ENCODE measurements at regions of chr10 and their contacts with region 1.

Region 1: GRCh38 chr10:19654576-19654975 is 161.7 kb upstream of the PLXDC2 start:
- DNase-seq: peak; percentile 28
- H3K4me3 Mint-ChIP-seq: peak overlapping the region; percentile 22
- H3K27ac Mint-ChIP-seq: peak overlapping the region; percentile 83
- H3K4me1 Mint-ChIP-seq: peaks cover 37% of the 10 kb centered on the region
- H3K27me3 Mint-ChIP-seq: no peaks in the 10 kb centered on the region
- CTCF ChIP-seq: no peak

Region 2: GRCh38 chr10:19638182-19638895 is 16.2 kb before region 1 on chr10:
- CTCF ChIA-PET with region 1: no interaction called
- POLR2A ChIA-PET with region 1: interaction called, 11 read pairs
- intact Hi-C with region 1: no loop called
- DNase-seq: peak; percentile 53
- H3K4me3 Mint-ChIP-seq: peak overlapping the region; percentile 52
- H3K27ac Mint-ChIP-seq: peak overlapping the region; percentile 70
- H3K4me1 Mint-ChIP-seq: peaks cover 25% of the 10 kb centered on the region
- H3K27me3 Mint-ChIP-seq: no peaks in the 10 kb centered on the region
- CTCF ChIP-seq: no peak

Region 3: DNA sequence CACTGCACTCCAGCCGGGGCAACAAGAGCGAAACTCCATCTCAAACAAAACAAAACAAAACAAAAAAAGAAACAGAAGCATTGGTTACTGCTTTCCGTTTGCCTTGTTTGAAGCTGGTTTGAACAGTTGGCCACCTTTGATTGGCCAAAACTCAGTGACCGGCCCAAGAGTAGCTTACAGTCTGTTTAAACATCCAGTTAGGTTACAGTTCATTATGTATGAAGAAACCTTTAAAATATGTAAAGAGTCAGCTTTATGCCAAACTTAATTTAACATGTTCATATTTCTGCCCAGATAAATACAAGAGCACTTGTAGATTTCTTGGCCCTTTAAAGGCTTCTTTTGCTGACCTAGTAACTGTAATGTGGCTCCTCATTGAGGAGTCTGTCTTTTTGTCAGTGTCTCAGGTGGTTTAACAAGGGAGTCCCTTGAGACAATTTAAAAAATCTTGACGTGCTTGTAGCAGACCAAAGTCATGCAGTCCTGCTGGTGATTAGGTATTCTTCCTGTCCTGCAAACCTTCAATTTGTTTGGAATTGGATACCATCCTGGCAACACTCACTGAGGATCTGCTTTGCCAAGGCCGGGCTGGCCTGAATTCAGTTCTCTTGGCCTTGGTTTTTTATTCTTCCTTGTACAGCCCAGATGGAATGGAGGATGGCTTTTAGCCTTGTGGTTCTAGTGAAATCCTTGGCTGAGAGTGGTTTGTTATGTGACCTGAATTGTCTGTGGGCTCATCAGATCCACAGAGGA is 290.5 kb after region 1 on chr10:
- CTCF ChIA-PET with region 1: no interaction called
- POLR2A ChIA-PET with region 1: no interaction called
- intact Hi-C with region 1: no loop called
- DNase-seq: no peak
- H3K4me3 Mint-ChIP-seq: no peak overlapping the region
- H3K27ac Mint-ChIP-seq: no peak overlapping the region
- H3K4me1 Mint-ChIP-seq: no peaks in the 10 kb centered on the region
- H3K27me3 Mint-ChIP-seq: no peaks in the 10 kb centered on the region
- CTCF ChIP-seq: no peak

Measured in MCF 10A (cell line).